B cell (primary cell): ENCODE measurements at regions of chr22 and their contacts with region 1.

Region 1: GRCh38 chr22:40651563-40652501 is 15.3 kb upstream of the MRTFA start:
- DNase-seq: peak; percentile 61
- ATAC-seq: peak; percentile 85
- H3K4me3 ChIP-seq: peak overlapping the region in 4 of 5 experiments; percentile 48 to 59 (median 50)
- H3K4me3 Mint-ChIP-seq: peak overlapping the region; percentile 86
- H3K27ac ChIP-seq: peak overlapping the region; percentile 29 to 41
- H3K27ac Mint-ChIP-seq: peak overlapping the region; percentile 88
- H3K4me1 ChIP-seq: peaks cover 0 to 6% of the 10 kb centered on the region in 2 donors
- H3K4me1 Mint-ChIP-seq: peaks cover 14% of the 10 kb centered on the region
- H3K27me3 ChIP-seq: no peaks in the 10 kb centered on the region
- H3K27me3 Mint-ChIP-seq: no peaks in the 10 kb centered on the region
- CTCF ChIP-seq: no peak

Region 2: DNA sequence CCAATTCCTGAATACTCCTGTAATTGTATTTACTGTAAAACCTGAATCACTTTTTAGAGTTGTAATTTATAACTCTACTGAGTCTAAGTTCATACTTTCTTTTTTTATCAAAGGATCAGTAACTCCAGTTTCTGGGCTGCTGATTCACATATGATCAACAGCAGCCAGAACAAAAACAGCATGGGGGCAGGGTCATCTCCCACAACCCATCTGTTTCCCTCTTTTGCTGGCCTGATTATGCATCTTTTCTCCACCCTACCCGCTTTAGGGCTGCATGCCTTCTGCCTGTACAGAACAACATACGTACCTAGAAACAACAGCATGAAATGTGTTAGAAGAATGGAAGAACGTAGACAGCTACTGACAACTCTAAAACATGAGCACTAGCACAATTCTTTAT is 91.3 kb before region 1 on chr22:
- CTCF ChIA-PET with region 1: no interaction called
- POLR2A ChIA-PET with region 1: no interaction called
- intact Hi-C with region 1: no loop called
- DNase-seq: no peak
- ATAC-seq: no peak
- H3K4me3 ChIP-seq: no peak overlapping the region
- H3K4me3 Mint-ChIP-seq: no peak overlapping the region
- H3K27ac ChIP-seq: no peak overlapping the region
- H3K27ac Mint-ChIP-seq: no peak overlapping the region
- H3K4me1 ChIP-seq: peaks cover 0 to 5% of the 10 kb centered on the region in 2 donors
- H3K4me1 Mint-ChIP-seq: peaks cover 17% of the 10 kb centered on the region
- H3K27me3 ChIP-seq: no peaks in the 10 kb centered on the region
- H3K27me3 Mint-ChIP-seq: no peaks in the 10 kb centered on the region
- CTCF ChIP-seq: no peak

Region 3: GRCh38 chr22:40597526-40598430 is 54.1 kb before region 1 on chr22:
- CTCF ChIA-PET with region 1: no interaction called
- POLR2A ChIA-PET with region 1: no interaction called
- intact Hi-C with region 1: no loop called
- DNase-seq: no peak
- ATAC-seq: no peak
- H3K4me3 ChIP-seq: no peak overlapping the region
- H3K4me3 Mint-ChIP-seq: peak overlapping the region; percentile 59
- H3K27ac ChIP-seq: peak overlapping the region in 1 of 2 donors; percentile 34
- H3K27ac Mint-ChIP-seq: no peak overlapping the region
- H3K4me1 ChIP-seq: peaks cover 45 to 48% of the 10 kb centered on the region in 2 donors
- H3K4me1 Mint-ChIP-seq: peaks cover 60% of the 10 kb centered on the region
- H3K27me3 ChIP-seq: no peaks in the 10 kb centered on the region
- H3K27me3 Mint-ChIP-seq: no peaks in the 10 kb centered on the region
- CTCF ChIP-seq: no peak

Region 4: DNA sequence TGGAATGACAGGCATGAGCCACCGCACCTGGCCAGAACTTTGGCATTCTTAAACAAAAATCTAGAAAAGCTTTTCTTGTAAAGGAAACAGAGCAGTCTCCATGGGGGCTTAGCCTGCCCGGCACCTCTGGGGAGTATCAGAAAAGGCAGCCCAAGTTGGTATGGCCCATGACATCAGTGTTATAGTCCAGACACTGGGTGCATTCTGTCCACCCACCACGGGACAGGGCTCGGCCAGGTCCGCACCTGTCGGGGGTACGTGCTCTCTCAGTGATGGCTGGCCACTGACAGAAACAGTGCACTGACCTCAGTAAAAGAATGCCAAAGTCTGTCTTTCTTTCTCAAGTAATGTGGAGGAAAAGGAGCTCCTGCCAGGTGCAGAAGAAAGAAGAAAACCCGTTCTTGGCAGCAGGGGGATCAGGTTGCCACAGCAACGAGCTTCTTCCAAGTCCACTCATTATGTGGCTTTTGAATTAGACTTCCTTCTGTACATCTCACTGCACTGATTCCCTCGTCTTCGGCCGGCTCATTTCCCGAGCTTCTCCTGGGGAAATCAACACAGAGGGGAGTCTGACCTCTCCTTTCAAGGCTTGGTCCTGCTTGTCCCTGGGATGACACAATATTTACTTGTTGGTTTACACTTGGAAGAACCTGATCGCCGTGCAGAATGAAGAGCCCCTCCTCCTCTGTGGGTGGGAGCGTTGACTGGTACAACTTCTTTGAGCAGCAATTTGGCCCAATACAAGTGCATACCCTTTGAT is 62.5 kb after region 1 on chr22:
- CTCF ChIA-PET with region 1: no interaction called
- POLR2A ChIA-PET with region 1: no interaction called
- intact Hi-C with region 1: no loop called
- DNase-seq: no peak
- ATAC-seq: no peak
- H3K4me3 ChIP-seq: no peak overlapping the region
- H3K4me3 Mint-ChIP-seq: no peak overlapping the region
- H3K27ac ChIP-seq: no peak overlapping the region
- H3K27ac Mint-ChIP-seq: no peak overlapping the region
- H3K4me1 ChIP-seq: peaks cover 6 to 9% of the 10 kb centered on the region in 2 donors
- H3K4me1 Mint-ChIP-seq: peaks cover 7% of the 10 kb centered on the region
- H3K27me3 ChIP-seq: peaks cover 0 to 14% (median 0%) of the 10 kb centered on the region in 4 experiments
- H3K27me3 Mint-ChIP-seq: peaks cover 18% of the 10 kb centered on the region
- CTCF ChIP-seq: no peak

Region 5: GRCh38 chr22:41197038-41197972 is 545.5 kb after region 1 on chr22:
- CTCF ChIA-PET with region 1: no interaction called
- POLR2A ChIA-PET with region 1: interaction called, 14 read pairs
- intact Hi-C with region 1: no loop called
- DNase-seq: peak; percentile 88
- ATAC-seq: peak; percentile 92
- H3K4me3 ChIP-seq: peak overlapping the region; percentile 73 to 85 (median 76)
- H3K4me3 Mint-ChIP-seq: peak overlapping the region; percentile 89
- H3K27ac ChIP-seq: no peak overlapping the region
- H3K27ac Mint-ChIP-seq: peak overlapping the region; percentile 2
- H3K4me1 ChIP-seq: peaks cover 7 to 17% of the 10 kb centered on the region in 2 donors
- H3K4me1 Mint-ChIP-seq: peaks cover 18% of the 10 kb centered on the region
- H3K27me3 ChIP-seq: peaks cover 0 to 7% (median 3%) of the 10 kb centered on the region in 4 experiments
- H3K27me3 Mint-ChIP-seq: peaks cover 3% of the 10 kb centered on the region
- CTCF ChIP-seq: peak; percentile 5